ENCODE measurements at regions of chr15 and their contacts with region 1.

Region 1: DNA sequence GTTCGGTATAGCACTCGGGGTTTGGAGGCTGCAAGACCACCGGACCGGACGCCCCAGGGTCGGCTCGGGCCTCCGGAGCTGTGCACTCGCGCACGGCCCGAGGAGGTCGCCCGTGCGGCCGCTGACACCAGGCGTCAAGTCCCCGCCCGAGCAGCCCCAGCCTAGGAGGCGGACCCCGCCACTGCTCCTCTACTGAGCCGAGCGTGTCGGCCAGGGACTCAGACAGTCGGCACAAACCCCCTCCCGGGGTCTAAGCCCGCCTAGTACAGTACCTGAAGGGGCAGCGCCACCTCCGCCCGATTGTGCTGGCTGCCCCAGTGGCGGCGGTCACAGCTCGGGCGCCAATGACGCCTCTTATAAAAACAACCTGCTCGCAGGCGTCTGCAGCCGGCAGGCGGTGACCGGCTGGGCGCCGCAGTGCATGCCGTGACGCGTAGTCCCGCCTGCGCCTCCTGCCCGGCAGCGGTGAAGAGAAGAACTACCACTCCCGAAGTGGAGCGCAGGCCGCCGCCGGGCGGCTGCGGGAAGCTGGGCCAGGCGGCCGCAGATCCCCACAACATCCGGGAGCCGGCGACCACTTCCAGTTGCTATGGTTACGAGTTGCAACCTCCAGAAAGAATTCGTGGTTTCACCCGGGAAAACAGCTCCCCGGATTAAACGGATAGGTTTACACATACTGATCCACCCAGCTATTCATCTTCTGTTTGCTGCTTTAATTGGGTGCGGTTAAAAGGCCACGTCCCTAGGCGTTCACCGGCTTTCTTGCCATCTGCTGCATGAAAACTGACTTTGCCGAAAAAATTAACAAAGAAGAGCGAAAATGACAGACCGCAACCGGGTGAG is at the starts of genes CCPG1 and PIERCE2:
- DNase-seq: peak; percentile 97
- H3K4me3 Mint-ChIP-seq: peak within 1 kb of the TSS; percentile 87
- H3K27ac Mint-ChIP-seq: peak within 1 kb of the TSS; percentile 90
- H3K4me1 Mint-ChIP-seq: peaks cover 27% of the 10 kb centered on the region
- H3K27me3 Mint-ChIP-seq: no peaks in the 10 kb centered on the region
- total RNA-seq, gene CCPG1: 9.0 and 10.2 TPM in 2 replicates
- total RNA-seq, gene PIERCE2: 0.49 TPM in 1 of 2 replicates, not detected in the other

Region 2: DNA sequence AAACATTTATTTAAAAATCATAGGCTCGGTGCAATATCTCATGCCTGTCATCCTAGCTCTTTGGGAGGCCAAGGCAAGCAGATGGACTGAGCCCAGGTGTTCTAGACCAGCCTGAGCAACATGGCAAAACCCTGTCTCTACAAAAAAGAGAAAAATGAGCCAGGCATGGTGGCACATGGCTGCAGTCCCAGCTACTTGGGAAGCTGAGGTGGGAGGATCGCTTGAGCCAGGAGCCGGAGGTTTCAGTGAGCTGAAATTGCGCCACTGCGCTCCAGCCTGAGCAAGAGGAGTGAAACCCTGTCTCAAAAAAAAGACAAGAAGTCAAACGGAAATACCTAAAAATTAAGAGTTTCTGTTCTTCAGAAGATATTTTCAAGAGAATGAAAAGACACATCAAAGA is 333.7 kb before region 1 on chr15:
- intact Hi-C with region 1: no loop called
- DNase-seq: no peak
- H3K4me3 Mint-ChIP-seq: no peak overlapping the region
- H3K27ac Mint-ChIP-seq: no peak overlapping the region
- H3K4me1 Mint-ChIP-seq: peaks cover 10% of the 10 kb centered on the region
- H3K27me3 Mint-ChIP-seq: peaks cover 6% of the 10 kb centered on the region

Region 3: GRCh38 chr15:55196458-55197361 is 211.5 kb before region 1 on chr15 and contains the start of gene RSL24D1:
- intact Hi-C with region 1: loop called (anchors 2 kb)
- DNase-seq: peak; percentile 99
- H3K4me3 Mint-ChIP-seq: no peak within 1 kb of the TSS
- H3K27ac Mint-ChIP-seq: no peak within 1 kb of the TSS
- H3K4me1 Mint-ChIP-seq: peaks cover 14% of the 10 kb centered on the region
- H3K27me3 Mint-ChIP-seq: no peaks in the 10 kb centered on the region
- total RNA-seq, gene RSL24D1: 121 TPM in 2 replicates

Region 4: DNA sequence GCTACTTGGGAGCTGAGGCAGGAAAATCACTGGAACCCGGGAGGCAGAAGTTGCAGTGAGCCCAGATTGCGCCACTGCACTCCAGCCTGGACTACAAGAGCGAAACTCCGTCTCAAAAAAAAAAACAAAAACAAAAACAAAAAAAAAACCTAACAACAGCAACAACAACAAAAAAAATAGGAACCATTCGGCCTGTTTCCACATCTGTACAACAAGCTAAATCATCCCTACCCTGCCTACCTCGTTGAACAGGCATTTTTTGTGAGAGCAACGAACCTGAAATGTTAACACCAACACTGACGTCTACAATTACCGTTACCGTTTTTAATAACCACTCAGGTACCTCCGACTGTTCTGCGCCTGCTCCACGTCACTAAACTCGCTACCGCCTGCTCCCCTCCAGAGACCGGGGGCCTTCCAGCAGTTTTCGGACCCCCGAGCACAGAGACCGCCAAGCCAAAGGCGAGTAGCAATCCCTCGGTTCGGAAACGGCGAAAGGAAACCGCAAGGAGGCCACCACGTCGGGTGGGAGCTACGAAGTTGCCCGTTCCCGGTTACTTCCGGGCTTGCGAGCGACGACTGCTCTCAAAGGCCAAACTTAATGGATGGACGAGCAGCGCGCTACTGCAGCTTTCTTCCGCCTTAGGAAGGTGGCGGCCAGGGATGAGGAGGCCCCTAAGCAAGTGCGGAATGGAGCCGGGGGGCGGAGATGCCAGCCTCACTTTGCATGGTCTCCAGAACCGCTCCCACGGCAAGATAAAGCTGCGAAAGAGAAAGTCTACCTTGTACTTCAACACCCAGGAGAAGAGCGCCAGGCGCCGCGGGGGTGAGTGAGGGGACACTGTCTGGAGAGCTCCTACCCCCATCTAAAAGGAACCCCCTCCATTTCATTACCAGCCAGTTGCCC is 89.3 kb before region 1 on chr15 and contains the starts of genes PIGB and PIGBOS1:
- intact Hi-C with region 1: loop called (anchors 1 kb)
- DNase-seq: peak; percentile 95
- H3K4me3 Mint-ChIP-seq: peak within 1 kb of the TSS; percentile 97
- H3K27ac Mint-ChIP-seq: peak within 1 kb of the TSS; percentile 99
- H3K4me1 Mint-ChIP-seq: peaks cover 39% of the 10 kb centered on the region
- H3K27me3 Mint-ChIP-seq: no peaks in the 10 kb centered on the region
- total RNA-seq, gene PIGB: 13.3 and 18.6 TPM in 2 replicates
- total RNA-seq, gene PIGBOS1: 9.7 and 10.3 TPM in 2 replicates

Region 5: DNA sequence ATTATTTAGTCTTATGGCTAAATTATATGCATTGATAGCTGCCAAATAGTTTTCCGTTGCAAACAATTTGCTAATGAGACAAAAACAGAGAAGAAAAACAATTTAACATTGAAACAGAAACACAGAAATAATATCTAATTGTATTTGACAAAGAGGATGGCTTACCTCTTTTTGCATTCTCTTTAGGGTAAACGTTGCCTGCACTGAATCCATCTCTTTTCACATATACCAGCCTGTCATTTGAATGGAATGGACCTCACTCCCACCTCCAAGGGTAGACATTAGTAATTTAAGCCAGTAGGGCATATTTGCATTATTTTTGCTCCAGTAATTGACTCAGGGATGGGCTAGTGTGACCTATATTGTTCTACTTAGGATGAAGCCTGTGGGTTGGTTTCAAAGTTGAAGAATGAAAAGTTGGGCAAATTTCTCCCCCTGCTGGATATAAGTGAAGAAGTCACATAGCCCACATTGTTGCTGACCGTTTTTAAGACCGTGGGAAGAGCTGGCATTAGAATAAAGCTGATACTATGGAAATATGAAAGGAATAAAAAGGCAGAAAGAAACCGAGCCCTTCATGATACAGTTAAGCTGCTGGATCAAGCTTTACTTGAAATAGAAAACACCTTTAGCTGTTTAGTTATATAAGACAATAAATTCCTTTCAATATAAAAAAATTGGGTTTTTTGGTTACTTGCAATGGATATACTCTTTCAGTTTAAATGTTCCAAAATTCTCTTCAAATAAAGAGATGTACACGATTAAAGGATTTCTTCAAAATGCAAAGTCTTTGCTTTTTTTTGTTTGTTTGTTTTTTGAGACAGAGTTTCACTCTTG is 27.0 kb after region 1 on chr15:
- intact Hi-C with region 1: loop called (anchors 1 kb)
- DNase-seq: peak; percentile 77
- H3K4me3 Mint-ChIP-seq: no peak overlapping the region
- H3K27ac Mint-ChIP-seq: no peak overlapping the region
- H3K4me1 Mint-ChIP-seq: peaks cover 4% of the 10 kb centered on the region
- H3K27me3 Mint-ChIP-seq: peaks cover 5% of the 10 kb centered on the region

Region 6: GRCh38 chr15:55494931-55495330 is 86.8 kb after region 1 on chr15:
- intact Hi-C with region 1: loop called (anchors 5 kb)
- DNase-seq: no peak
- H3K4me3 Mint-ChIP-seq: no peak overlapping the region
- H3K27ac Mint-ChIP-seq: no peak overlapping the region
- H3K4me1 Mint-ChIP-seq: peaks cover 7% of the 10 kb centered on the region
- H3K27me3 Mint-ChIP-seq: no peaks in the 10 kb centered on the region